Motor neuron (in vitro differentiated cells): ENCODE measurements at regions of chr1 and their contacts with region 1.

Region 1: DNA sequence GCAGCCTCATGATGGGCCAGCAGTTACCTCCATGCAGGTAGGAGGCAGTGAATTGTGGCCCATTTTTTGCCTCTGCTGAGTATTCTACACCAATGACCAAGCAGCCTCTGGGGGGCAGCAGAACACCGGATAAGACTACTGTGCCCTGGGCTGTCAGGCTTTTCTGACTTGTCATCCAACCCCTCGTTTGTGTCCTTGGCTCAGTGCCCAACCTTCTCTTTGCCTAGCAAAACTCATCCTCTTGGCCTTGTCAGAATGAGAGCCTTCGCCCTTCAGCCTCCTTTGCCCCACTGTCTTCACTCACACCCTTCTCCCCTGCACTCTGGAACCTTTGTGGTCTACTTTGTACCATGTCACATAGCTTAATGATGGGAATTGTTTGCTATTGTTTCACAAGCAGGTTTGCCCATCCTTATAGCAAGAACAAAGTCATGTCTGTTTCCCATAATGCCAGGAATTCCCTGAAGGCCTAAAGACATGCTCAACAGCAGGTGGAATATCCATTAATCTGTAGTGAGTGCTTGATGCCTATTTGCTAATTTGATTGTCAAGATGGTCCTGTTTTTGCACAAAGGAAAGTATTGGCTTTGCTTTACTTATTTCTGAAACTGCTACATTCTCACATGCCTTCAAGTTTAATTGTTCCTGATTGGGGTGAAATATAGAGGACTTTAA is 255.9 kb downstream of the HHAT start:
- ATAC-seq: peak; percentile 52 to 100 (median 99)
- H3K4me3 ChIP-seq: no peak overlapping the region
- H3K27ac ChIP-seq: no peak overlapping the region
- H3K4me1 ChIP-seq: peaks cover 3% of the 10 kb centered on the region in 2 donors

Region 2: GRCh38 chr1:210448297-210448892 is 136.2 kb before region 1 on chr1:
- in situ Hi-C with region 1: no loop called
- ATAC-seq: peak; percentile 43 to 89 (median 70)
- H3K4me3 ChIP-seq: no peak overlapping the region
- H3K27ac ChIP-seq: no peak overlapping the region
- H3K4me1 ChIP-seq: no peaks in the 10 kb centered on the region

Region 3: GRCh38 chr1:210696709-210697108 is 112.1 kb after region 1 on chr1:
- in situ Hi-C with region 1: loop called in 1 of 9 experiments (anchors 25 kb)
- ATAC-seq: peak in 2 of 8 experiments; percentile 9 to 26
- H3K4me3 ChIP-seq: no peak overlapping the region
- H3K27ac ChIP-seq: no peak overlapping the region
- H3K4me1 ChIP-seq: peaks cover 4% of the 10 kb centered on the region in 2 donors

Region 4: GRCh38 chr1:210908257-210908656 is 323.7 kb after region 1 on chr1:
- in situ Hi-C with region 1: loop called in 1 of 9 experiments (anchors 25 kb)
- ATAC-seq: no peak
- H3K4me3 ChIP-seq: no peak overlapping the region
- H3K27ac ChIP-seq: no peak overlapping the region
- H3K4me1 ChIP-seq: peaks cover 27 to 28% of the 10 kb centered on the region in 2 donors

Region 5: GRCh38 chr1:211017075-211017748 is 432.6 kb after region 1 on chr1:
- in situ Hi-C with region 1: loop called in 1 of 9 experiments (anchors 25 kb)
- ATAC-seq: no peak
- H3K4me3 ChIP-seq: no peak overlapping the region
- H3K27ac ChIP-seq: no peak overlapping the region
- H3K4me1 ChIP-seq: peaks cover 0 to 3% of the 10 kb centered on the region in 2 donors